ENCODE measurements at regions of chr15 and their contacts with region 1.

Region 1: GRCh38 chr15:63146669-63147068 is 10.6 kb downstream of the RPS27L start:
- DNase-seq: no peak
- H3K4me3 ChIP-seq: no peak overlapping the region
- CTCF ChIP-seq: no peak

Region 2: DNA sequence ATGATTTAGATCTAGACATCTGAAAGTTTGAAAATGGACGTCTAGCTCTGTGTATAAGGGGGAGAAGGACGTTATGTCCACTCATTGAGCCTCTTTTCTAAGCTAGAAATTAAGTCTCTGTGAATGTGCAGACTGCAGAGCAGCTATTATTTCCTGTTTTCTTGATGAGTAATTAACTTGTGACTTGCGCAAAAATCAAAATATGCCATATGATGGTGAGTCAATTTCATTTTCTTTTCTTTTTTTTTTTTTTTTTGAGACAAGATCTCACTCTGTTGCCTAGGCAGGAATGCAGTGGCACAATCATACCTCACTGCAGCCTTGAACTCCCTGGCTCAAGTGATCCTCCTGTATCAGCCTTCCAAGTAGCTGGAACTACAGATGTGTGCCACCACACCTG is 10.9 kb before region 1 on chr15:
- CTCF ChIA-PET with region 1: interaction called, 7 read pairs
- POLR2A ChIA-PET with region 1: interaction called, 10 read pairs
- DNase-seq: peak; percentile 62
- H3K4me3 ChIP-seq: no peak overlapping the region
- CTCF ChIP-seq: no peak

Measured in AG04449 (cell line).